Right cardiac atrium (tissue), 5 donors: ENCODE measurements at regions of chr2 and their contacts with region 1.

Region 1: GRCh38 chr2:233053928-233054784 is 6.0 kb upstream of the INPP5D start:
- DNase-seq: peak; percentile 55 to 84 (median 82)
- ATAC-seq: peak; percentile 38 to 40
- H3K4me3 ChIP-seq: no peak overlapping the region
- H3K27ac ChIP-seq: no peak overlapping the region
- H3K4me1 ChIP-seq: no peaks in the 10 kb centered on the region
- H3K27me3 ChIP-seq: no peaks in the 10 kb centered on the region

Region 2: DNA sequence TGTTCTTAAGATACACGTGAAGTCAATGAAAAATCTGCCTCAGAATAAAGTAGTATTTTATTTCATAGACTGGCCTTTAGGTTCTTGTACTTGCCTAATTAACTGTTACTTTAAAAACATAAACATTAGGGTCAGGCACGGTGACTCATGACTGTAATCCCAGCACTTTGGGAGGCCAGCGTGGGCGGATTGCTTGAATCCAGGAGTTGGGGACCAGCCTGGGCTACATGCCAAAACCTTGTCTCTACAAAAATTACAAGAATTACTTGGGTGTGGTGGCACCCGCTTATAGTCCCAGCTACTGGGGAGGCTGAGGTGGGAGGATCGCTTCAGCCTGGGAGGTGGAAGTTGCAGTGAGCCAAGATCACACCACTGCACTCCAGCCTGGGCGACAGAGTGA is 200.1 kb before region 1 on chr2:
- intact Hi-C with region 1: loop called in 2 of 4 experiments (anchors 5 to 10 kb)
- DNase-seq: peak in 1 of 3 donors; percentile 51
- ATAC-seq: peak in 1 of 2 donors; percentile 69
- H3K4me3 ChIP-seq: no peak overlapping the region
- H3K27ac ChIP-seq: no peak overlapping the region
- H3K4me1 ChIP-seq: peaks cover 1% of the 10 kb centered on the region
- H3K27me3 ChIP-seq: no peaks in the 10 kb centered on the region

Region 3: DNA sequence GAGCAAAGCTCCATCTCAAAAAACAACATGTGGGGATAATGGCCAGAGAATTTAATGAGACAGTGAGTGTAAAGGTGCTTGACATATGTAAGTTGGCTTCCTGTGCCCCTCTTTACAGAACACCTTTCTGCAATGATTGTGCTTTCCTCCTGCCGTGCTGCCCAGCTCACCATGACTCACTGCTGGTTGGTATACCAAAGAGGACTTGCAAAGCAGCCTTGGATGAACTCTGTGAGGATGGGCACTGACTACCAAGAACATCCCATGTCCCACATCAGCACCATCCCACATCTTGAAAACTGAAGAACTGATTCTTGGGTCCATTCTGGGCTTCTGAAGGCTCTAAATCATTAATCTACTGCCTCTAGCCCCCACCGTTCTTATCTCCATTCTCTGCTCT is 93.3 kb before region 1 on chr2:
- intact Hi-C with region 1: no loop called
- DNase-seq: no peak
- ATAC-seq: no peak
- H3K4me3 ChIP-seq: no peak overlapping the region
- H3K27ac ChIP-seq: no peak overlapping the region
- H3K4me1 ChIP-seq: no peaks in the 10 kb centered on the region
- H3K27me3 ChIP-seq: no peaks in the 10 kb centered on the region

Region 4: GRCh38 chr2:232997749-232998665 is 56.1 kb before region 1 on chr2:
- intact Hi-C with region 1: no loop called
- DNase-seq: no peak
- ATAC-seq: no peak
- H3K4me3 ChIP-seq: no peak overlapping the region
- H3K27ac ChIP-seq: no peak overlapping the region
- H3K4me1 ChIP-seq: no peaks in the 10 kb centered on the region
- H3K27me3 ChIP-seq: no peaks in the 10 kb centered on the region